Left cardiac atrium (tissue), 4 donors: ENCODE measurements at regions of chr6 and their contacts with region 1.

Region 1: DNA sequence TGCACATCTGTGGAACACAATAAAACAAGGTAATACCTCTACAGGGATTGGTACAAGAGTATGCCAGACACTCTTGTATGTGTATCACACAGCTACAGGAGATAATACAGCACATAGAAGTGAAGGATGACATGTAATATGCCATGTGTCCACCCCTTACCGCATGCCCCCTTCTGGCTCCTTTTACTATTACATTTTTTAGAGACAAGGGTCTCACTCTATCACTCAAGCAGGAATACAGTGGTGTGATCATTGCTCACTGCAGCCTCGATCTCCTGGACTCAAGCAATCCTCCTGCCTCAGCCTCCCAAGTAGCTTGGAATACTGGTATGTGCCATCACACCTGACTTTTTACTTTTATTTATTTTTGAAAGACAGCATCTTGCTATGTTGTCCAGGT is 4.2 kb upstream of the NCR3 start:
- DNase-seq: no peak
- ATAC-seq: peak; percentile 24 to 55

Region 2: DNA sequence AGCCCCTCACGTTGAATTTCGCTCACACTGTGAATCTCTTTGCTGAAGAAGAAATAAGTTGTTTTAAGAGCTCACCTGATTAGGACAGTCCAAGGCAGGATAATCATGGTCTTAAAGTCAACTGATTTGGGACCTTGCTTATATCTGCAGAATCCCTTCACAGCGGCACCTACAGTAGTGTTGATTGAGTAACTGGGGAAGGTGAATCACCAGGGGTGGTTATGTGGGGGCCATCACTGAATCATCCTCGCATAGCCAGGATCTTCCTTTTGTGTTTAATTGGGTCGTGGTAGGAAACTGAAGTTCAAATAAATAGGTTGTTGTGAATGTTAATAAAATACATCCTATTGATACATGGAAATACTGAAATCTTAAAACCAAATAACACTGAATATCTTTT is 213.9 kb before region 1 on chr6:
- intact Hi-C with region 1: no loop called
- DNase-seq: no peak
- ATAC-seq: no peak

Region 3: DNA sequence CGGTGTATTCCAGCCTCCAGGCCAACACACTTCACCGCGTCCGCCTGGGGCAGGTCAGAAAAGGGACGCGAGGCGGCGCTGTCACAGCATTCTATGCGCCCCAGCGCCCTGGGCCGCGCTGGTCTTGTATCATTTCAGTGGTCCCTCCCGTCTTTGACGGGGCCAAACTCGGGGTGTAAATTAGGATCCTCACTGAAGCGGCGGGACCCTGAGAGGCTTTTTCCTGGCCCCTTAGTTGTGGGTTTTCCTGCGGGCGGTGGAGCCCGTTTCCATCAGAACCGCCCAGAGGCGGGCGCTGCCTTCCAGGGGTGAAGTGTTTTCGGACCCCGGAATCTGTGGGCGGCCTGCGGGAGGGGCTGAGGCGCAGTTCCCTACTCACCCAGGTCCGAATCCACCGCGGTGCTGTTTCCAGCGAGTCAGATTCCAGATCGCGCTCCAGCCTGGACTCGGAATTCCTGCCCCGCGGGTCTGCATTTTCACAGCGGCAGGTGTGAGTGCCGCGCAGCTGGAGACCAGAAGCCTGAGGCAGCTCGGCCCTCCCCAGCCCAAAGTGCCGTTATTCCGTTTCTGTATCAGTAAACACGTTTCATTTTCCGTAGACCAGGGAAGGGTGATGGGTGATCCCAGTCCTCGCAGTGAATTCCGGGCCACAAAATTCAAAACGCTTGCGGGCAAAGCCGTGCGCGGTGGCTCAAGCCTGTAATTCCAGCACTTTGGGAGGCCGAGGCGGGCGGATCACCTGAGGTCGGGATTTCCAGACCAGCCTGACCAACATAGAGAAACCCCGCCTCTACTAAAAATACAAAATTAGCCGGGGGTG is 102.9 kb before region 1 on chr6:
- intact Hi-C with region 1: loop called in 1 of 2 experiments (anchors 5 kb)
- DNase-seq: peak; percentile 86
- ATAC-seq: peak; percentile 76 to 82

Region 4: GRCh38 chr6:31546962-31547726 is 49.9 kb before region 1 on chr6 and contains the start of gene NFKBIL1:
- intact Hi-C with region 1: loop called (anchors 1 to 5 kb)
- DNase-seq: peak; percentile 97
- ATAC-seq: peak; percentile 97 to 98
- total RNA-seq, gene NFKBIL1: 12.9 to 14.8 TPM